Activated CD4-positive, alpha-beta memory T cell treated with anti-CD3 and anti-CD28 coated beads for 36 hours (primary cell): ENCODE measurements at regions of chr4 and their contacts with region 1.

Region 1: DNA sequence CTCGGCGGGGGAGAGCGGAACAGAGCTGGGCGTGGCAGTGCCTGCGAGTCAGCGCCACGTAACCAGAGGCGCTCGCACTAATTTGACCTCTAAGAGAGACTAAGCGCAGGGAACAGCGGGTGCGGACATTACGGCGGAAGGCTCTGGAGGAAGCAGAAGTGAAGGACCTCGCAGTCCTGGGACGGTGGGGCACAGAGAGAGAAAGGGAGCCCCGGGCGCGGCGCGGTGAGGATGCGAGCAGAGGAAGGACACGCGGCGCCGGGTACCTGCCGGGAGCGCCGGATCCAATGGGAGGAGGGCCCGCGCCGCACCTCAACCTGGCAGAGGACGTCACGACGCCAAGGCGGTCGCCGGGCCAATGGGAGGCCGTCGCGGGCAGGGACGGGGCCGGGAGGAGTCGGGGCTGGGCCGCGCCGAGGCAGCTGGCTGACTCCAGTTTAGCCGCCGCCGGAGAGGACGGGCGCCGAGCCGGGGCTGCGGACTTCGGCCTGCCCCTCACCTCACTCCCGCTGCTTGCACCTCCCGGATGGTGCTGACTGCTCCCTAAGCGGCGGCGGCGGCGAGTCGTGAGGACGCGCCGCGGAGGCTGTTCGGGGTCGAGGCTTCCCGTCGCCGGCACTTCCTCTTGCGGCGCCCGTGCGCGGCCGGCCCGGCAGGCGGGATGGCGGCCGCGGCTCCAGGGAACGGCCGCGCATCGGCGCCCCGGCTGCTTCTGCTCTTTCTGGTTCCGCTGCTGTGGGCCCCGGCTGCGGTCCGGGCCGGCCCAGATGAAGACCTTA is at the start of gene TMEM165:
- DNase-seq: peak; percentile 94
- H3K4me3 Mint-ChIP-seq: peak within 1 kb of the TSS; percentile 90
- H3K27ac Mint-ChIP-seq: peak within 1 kb of the TSS; percentile 93
- H3K4me1 Mint-ChIP-seq: peaks cover 30% of the 10 kb centered on the region
- H3K27me3 Mint-ChIP-seq: no peaks in the 10 kb centered on the region
- total RNA-seq, gene TMEM165: 50.4 to 56.8 TPM

Region 2: GRCh38 chr4:55435141-55435841 is 39.6 kb after region 1 on chr4:
- CTCF ChIA-PET with region 1: interaction called, 4 read pairs
- POLR2A ChIA-PET with region 1: no interaction called
- intact Hi-C with region 1: loop called (anchors 1 kb)
- DNase-seq: peak; percentile 63
- H3K4me3 Mint-ChIP-seq: no peak overlapping the region
- H3K27ac Mint-ChIP-seq: peak overlapping the region; percentile 35
- H3K4me1 Mint-ChIP-seq: peaks cover 15% of the 10 kb centered on the region
- H3K27me3 Mint-ChIP-seq: no peaks in the 10 kb centered on the region

Region 3: DNA sequence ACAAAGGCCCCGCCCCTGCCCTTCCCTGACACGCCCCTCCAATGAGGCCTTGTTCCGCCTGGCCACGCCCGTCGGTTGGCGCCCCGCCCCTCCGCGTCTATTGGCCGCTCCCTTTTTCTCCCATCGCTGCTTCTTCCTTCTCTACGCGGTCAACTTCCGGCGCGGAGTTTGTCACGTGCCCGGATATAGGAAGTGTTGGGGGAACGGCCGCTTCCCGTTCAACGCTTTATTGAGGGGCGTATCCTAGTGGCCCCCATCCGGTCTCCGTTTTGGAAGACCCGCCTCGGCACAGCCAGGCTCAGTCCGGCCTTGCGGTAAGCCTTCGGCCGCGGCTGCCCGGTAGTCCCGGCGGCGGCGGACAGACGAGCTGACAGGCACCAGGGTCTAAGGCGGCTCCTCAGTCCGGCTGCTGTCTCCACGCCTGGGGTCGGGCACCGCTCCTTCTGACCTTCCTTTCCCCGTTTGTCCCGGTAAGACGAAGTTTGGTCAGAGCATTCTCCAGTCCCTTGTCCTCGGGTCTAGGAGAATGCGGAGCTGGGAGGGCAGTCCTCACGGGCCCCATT is 457.8 kb after region 1 on chr4 and contains the start of gene EXOC1:
- CTCF ChIA-PET with region 1: no interaction called
- POLR2A ChIA-PET with region 1: interaction called, 3 read pairs
- intact Hi-C with region 1: loop called (anchors 1 kb)
- DNase-seq: peak; percentile 99
- H3K4me3 Mint-ChIP-seq: peak within 1 kb of the TSS; percentile 7
- H3K27ac Mint-ChIP-seq: peak within 1 kb of the TSS; percentile 82
- H3K4me1 Mint-ChIP-seq: peaks cover 33% of the 10 kb centered on the region
- H3K27me3 Mint-ChIP-seq: no peaks in the 10 kb centered on the region
- total RNA-seq, gene EXOC1: 21.9 to 22.4 TPM